ENCODE measurements at regions of chr22 and their contacts with region 1.

Region 1: GRCh38 chr22:25110846-25111578 is 88.6 kb upstream of the CRYBB3 start:
- DNase-seq: peak; percentile 86 to 87
- H3K4me3 ChIP-seq: peak overlapping the region; percentile 62
- H3K4me3 Mint-ChIP-seq: peak overlapping the region; percentile 83
- H3K27ac Mint-ChIP-seq: peak overlapping the region; percentile 96
- H3K4me1 ChIP-seq: peaks cover 15% of the 10 kb centered on the region; the same call in 1 of the 2 replicates
- H3K4me1 Mint-ChIP-seq: peaks cover 5% of the 10 kb centered on the region
- H3K27me3 ChIP-seq: no peaks in the 10 kb centered on the region
- H3K27me3 Mint-ChIP-seq: no peaks in the 10 kb centered on the region
- CTCF ChIP-seq: peak; percentile 64 to 68

Region 2: DNA sequence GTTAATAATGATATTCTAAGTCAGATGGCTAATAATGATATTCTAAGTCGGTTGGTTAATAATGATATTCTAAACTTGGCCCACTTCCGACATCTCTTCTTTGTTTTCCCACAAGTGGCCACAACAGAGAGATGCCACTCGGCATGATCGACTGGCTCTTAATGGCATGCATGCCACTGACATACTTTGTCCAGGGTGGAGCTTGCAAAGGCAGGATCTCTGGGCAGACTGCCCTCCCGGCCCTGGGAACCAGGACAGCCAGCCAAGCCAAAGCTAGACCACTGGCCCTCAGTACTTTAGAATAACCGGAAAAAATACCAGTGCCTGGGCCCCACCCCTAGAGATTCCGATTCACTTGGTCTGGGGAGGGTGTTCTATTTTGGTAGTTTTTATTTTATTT is 80.4 kb before region 1 on chr22:
- CTCF ChIA-PET with region 1: no interaction called
- POLR2A ChIA-PET with region 1: no interaction called
- intact Hi-C with region 1: no loop called
- DNase-seq: no peak
- H3K4me3 ChIP-seq: no peak overlapping the region
- H3K4me3 Mint-ChIP-seq: no peak overlapping the region
- H3K27ac Mint-ChIP-seq: no peak overlapping the region
- H3K4me1 ChIP-seq: peaks cover 20% of the 10 kb centered on the region
- H3K4me1 Mint-ChIP-seq: peaks cover 19% of the 10 kb centered on the region
- H3K27me3 ChIP-seq: no peaks in the 10 kb centered on the region
- H3K27me3 Mint-ChIP-seq: no peaks in the 10 kb centered on the region
- CTCF ChIP-seq: no peak

Region 3: DNA sequence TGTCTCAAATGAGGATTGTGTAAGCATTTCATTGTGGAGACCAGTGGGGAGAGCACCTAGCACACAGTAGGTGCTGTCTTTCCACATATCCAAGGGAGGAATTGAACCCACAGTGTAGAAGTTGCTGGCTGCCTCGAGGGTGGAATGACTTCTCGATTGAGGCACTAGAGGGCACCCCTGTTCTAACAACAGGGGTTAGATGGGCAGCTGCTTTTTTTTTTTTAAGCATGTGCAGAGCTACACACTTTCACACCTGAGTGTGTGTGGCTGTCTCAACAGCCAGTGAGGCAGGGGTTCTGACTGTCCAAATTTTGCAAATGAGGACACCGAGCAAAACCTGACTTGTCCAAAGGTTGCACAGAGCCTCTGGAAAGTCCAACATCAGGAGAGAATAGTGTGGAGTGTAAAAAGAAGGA is 29.6 kb before region 1 on chr22:
- CTCF ChIA-PET with region 1: interaction called, 17 read pairs
- POLR2A ChIA-PET with region 1: no interaction called
- intact Hi-C with region 1: loop called (anchors 1 kb)
- DNase-seq: peak; percentile 49 to 60
- H3K4me3 ChIP-seq: no peak overlapping the region
- H3K4me3 Mint-ChIP-seq: no peak overlapping the region
- H3K27ac Mint-ChIP-seq: peak overlapping the region; percentile 5
- H3K4me1 ChIP-seq: no peaks in the 10 kb centered on the region
- H3K4me1 Mint-ChIP-seq: peaks cover 12% of the 10 kb centered on the region
- H3K27me3 ChIP-seq: no peaks in the 10 kb centered on the region
- H3K27me3 Mint-ChIP-seq: no peaks in the 10 kb centered on the region
- CTCF ChIP-seq: peak; percentile 64 to 67

Region 4: GRCh38 chr22:25143156-25144076 is 32.4 kb after region 1 on chr22:
- CTCF ChIA-PET with region 1: interaction called, 4 read pairs
- POLR2A ChIA-PET with region 1: no interaction called
- intact Hi-C with region 1: loop called (anchors 2 kb)
- DNase-seq: no peak
- H3K4me3 ChIP-seq: no peak overlapping the region
- H3K4me3 Mint-ChIP-seq: no peak overlapping the region
- H3K27ac Mint-ChIP-seq: no peak overlapping the region
- H3K4me1 ChIP-seq: no peaks in the 10 kb centered on the region
- H3K4me1 Mint-ChIP-seq: no peaks in the 10 kb centered on the region
- H3K27me3 ChIP-seq: no peaks in the 10 kb centered on the region
- H3K27me3 Mint-ChIP-seq: no peaks in the 10 kb centered on the region
- CTCF ChIP-seq: no peak

Region 5: DNA sequence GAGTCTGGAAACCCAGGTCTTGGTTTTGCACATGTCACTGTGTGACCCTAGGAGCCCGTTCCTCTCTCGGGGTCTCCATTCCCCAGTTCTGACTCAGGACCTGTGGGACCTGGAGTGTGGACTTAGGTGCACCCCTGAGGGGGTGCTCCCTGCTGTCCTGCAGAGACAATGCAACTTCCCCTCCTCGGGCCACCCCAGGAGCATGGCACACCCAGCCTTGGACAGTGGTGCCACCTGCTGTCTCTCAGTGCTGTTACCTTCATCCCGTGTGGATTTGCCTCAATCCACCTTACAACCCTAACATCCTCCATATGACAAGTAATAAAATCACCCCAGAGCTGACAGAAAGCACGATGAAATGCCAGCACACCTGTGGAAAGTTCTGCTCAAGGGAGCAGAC is 61.1 kb after region 1 on chr22:
- CTCF ChIA-PET with region 1: no interaction called
- POLR2A ChIA-PET with region 1: no interaction called
- intact Hi-C with region 1: loop called (anchors 2 kb)
- DNase-seq: peak in 1 of 2 experiments; percentile 43
- H3K4me3 ChIP-seq: no peak overlapping the region
- H3K4me3 Mint-ChIP-seq: no peak overlapping the region
- H3K27ac Mint-ChIP-seq: no peak overlapping the region
- H3K4me1 ChIP-seq: no peaks in the 10 kb centered on the region
- H3K4me1 Mint-ChIP-seq: no peaks in the 10 kb centered on the region
- H3K27me3 ChIP-seq: no peaks in the 10 kb centered on the region
- H3K27me3 Mint-ChIP-seq: no peaks in the 10 kb centered on the region
- CTCF ChIP-seq: peak in 1 of 2 experiments; percentile 36

Region 6: DNA sequence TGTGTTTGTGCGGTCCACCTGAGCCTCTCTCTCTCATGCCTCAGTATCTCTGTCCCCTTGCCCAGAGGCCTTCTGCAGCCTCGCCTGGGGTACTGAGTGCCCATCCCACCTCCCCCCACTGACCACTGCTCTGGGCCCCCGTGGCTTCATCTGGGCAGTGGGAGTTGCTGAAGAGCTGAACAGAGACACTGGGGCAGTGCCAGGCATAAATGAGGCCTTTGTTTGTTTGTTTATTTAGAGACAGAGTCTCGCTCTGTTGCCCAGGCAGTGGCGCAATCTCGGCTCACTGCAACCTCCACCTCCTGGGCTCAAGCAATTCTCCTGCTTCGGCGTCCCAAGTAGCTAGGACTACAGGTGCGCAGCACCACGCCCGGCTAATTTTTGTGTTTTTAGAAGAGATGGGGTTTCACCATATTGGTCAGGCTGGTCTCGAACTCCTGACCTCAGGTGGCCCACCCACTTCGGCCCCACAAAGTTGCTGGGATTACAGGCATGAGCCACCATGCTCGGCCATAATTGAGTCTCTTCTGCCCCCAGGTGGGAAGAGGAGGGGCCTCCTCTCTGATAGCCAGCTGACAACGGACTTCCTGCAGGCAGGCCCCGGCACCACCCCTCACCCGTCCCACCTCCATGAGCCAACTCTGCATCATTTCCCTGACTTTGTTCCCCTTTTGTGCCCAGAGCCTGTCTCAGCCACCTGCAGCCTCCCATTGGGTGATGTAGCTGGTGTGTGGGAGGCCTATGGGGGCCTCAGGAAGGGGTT is 97.9 kb after region 1 on chr22:
- CTCF ChIA-PET with region 1: no interaction called
- POLR2A ChIA-PET with region 1: no interaction called
- intact Hi-C with region 1: no loop called
- DNase-seq: no peak
- H3K4me3 ChIP-seq: no peak overlapping the region
- H3K4me3 Mint-ChIP-seq: no peak overlapping the region
- H3K27ac Mint-ChIP-seq: no peak overlapping the region
- H3K4me1 ChIP-seq: no peaks in the 10 kb centered on the region
- H3K4me1 Mint-ChIP-seq: no peaks in the 10 kb centered on the region
- H3K27me3 ChIP-seq: no peaks in the 10 kb centered on the region
- H3K27me3 Mint-ChIP-seq: no peaks in the 10 kb centered on the region
- CTCF ChIP-seq: no peak

Region 7: GRCh38 chr22:25235547-25236290 is 124.7 kb after region 1 on chr22:
- CTCF ChIA-PET with region 1: no interaction called
- POLR2A ChIA-PET with region 1: no interaction called
- intact Hi-C with region 1: no loop called
- DNase-seq: peak; percentile 89 to 92
- H3K4me3 ChIP-seq: peak overlapping the region; percentile 18
- H3K4me3 Mint-ChIP-seq: peak overlapping the region; percentile 44
- H3K27ac Mint-ChIP-seq: no peak overlapping the region
- H3K4me1 ChIP-seq: no peaks in the 10 kb centered on the region
- H3K4me1 Mint-ChIP-seq: no peaks in the 10 kb centered on the region
- H3K27me3 ChIP-seq: no peaks in the 10 kb centered on the region
- H3K27me3 Mint-ChIP-seq: peaks cover 11% of the 10 kb centered on the region
- CTCF ChIP-seq: peak; percentile 79 to 95

Region 8: GRCh38 chr22:25630447-25630846 is 519.4 kb after region 1 on chr22:
- CTCF ChIA-PET with region 1: no interaction called
- POLR2A ChIA-PET with region 1: no interaction called
- intact Hi-C with region 1: no loop called
- DNase-seq: no peak
- H3K4me3 ChIP-seq: no peak overlapping the region
- H3K4me3 Mint-ChIP-seq: no peak overlapping the region
- H3K27ac Mint-ChIP-seq: no peak overlapping the region
- H3K4me1 ChIP-seq: no peaks in the 10 kb centered on the region
- H3K4me1 Mint-ChIP-seq: peaks cover 6% of the 10 kb centered on the region
- H3K27me3 ChIP-seq: no peaks in the 10 kb centered on the region
- H3K27me3 Mint-ChIP-seq: no peaks in the 10 kb centered on the region
- CTCF ChIP-seq: no peak